ENCODE measurements at regions of chr16 and their contacts with region 1.

Region 1: DNA sequence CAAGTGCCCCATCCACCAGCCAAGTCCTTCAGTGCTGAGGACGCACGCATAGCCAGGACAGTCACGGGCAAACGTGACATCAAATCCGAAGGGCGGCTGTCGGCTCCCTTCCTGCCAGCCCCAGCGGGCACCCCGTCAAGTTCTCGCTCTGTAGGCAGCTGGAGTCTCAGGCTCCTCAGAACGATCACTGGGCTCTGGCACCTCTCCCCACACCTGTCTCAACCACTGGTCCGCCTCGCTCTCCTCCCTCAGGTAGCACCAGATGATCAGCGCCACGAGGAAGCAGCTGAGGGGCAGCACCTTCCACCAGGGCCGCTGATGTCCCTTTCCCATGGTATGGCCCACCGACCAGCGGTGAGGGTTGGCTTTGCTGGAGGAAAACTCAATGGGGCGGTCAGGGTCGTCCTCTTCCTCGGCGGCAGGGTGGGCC is 421 bp downstream of the UQCC4 start:
- DNase-seq: no peak
- ATAC-seq: peak; percentile 34
- H3K4me3 ChIP-seq: peak overlapping the region; percentile 86
- H3K27ac ChIP-seq: peak overlapping the region; percentile 46
- H3K4me1 ChIP-seq: 0 out of 2 replicates have a peak, but pooled peaks cover 5% of the 10 kb centered on the region
- H3K27me3 ChIP-seq: no peaks in the 10 kb centered on the region
- CTCF ChIP-seq: no peak

Region 2: GRCh38 chr16:1435921-1436697 is 16.0 kb after region 1 on chr16:
- CTCF ChIA-PET with region 1: no interaction called
- POLR2A ChIA-PET with region 1: interaction called, 17 read pairs
- intact Hi-C with region 1: no loop called
- DNase-seq: no peak
- ATAC-seq: peak; percentile 42
- H3K4me3 ChIP-seq: no peak overlapping the region
- H3K27ac ChIP-seq: no peak overlapping the region
- H3K4me1 ChIP-seq: no peaks in the 10 kb centered on the region
- H3K27me3 ChIP-seq: no peaks in the 10 kb centered on the region
- CTCF ChIP-seq: no peak

Region 3: DNA sequence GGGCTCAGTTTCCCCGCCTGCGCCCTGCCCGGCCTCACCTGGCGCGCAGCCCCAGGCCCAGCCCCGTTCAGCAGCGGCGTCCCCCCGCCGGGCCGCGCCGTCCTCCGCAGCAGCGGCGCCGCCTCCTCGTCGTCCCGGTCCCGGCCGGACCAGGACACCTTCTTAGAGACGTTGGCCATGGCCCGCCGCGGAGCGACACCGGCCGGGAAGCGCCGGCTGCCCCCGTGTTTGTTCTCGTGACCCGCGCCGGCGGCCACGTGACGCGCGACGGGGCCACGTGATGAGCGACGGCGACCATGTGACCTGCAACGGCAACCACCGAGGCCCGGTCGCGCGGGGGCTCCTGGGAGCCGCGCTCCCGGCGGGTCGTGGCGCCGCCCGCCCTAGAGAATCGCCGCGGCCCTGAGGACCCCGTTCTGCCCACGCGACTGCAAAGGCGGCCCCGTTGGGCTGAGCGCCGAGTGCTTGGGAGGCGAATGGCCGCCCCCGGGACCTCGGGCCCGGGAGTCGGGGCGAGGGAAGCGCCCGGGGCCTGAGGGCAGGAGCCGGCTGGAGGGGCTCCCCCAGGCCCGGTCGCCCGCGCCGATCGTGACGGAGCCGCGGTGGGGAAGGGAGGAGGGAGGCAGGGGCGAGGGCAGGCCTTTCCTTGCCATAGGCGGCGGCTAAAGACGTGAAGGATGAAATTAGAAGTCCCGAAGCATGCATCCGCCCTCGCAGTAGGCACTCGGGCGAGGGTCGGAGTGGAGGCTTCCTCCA is 54.8 kb after region 1 on chr16 and contains the start of gene CLCN7:
- CTCF ChIA-PET with region 1: no interaction called
- POLR2A ChIA-PET with region 1: no interaction called
- intact Hi-C with region 1: no loop called
- DNase-seq: peak; percentile 58
- ATAC-seq: peak; percentile 78
- H3K4me3 ChIP-seq: peak within 1 kb of the TSS; percentile 79
- H3K27ac ChIP-seq: peak within 1 kb of the TSS; percentile 23
- H3K4me1 ChIP-seq: peaks cover 5% of the 10 kb centered on the region; the same call in 1 of the 2 replicates
- H3K27me3 ChIP-seq: no peaks in the 10 kb centered on the region
- CTCF ChIP-seq: no peak
- total RNA-seq, gene CLCN7: 48.2 and 66.6 TPM in 2 replicates

Measured in PC-3 (cell line).